ENCODE measurements at regions of chr18 and their contacts with region 1.

Region 1: GRCh38 chr18:36809590-36810381 is 19.0 kb downstream of the TPGS2 start:
- DNase-seq: peak in 2 of 5 donors; percentile 21 to 29
- ATAC-seq: peak in 3 of 4 donors; percentile 77 to 83 (median 80)
- H3K4me3 ChIP-seq: no peak overlapping the region
- H3K27ac ChIP-seq: no peak overlapping the region
- H3K4me1 ChIP-seq: peaks cover 0 to 22% (median 6%) of the 10 kb centered on the region in 12 donors
- H3K27me3 ChIP-seq: no peaks in the 10 kb centered on the region
- CTCF ChIP-seq: peak; percentile 70 to 88 (median 81)
- POLR2A ChIP-seq: no peak

Region 2: DNA sequence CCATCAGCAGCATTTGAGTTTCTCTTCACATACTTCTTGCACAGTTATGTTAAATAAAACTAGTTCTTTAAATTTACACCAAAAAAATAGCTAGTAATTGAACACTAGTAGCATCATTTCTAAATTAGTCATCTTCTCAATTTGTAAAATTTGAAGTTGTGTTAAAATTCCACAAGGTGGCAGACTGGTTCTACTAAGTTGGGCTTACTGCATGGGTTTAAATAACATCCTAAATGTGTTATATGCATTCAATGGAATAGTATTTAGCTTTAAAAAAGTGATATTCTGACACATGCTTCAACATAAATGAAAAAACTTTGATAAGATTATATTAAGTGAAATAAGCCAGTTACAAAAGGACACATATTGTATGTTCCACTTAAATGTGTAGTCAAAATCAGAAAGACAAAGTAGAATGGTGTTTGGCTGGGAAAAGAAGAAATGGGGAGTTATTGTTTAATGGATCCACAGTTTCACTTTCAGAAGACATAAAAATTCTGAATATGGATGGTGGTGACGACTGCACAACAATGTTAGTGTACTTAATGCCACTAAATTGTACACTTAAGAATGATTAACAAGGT is 713.8 kb before region 1 on chr18:
- intact Hi-C with region 1: loop called in 1 of 10 experiments (anchors 10 kb)
- DNase-seq: no peak
- ATAC-seq: peak in 1 of 4 donors; percentile 42
- H3K4me3 ChIP-seq: no peak overlapping the region
- H3K27ac ChIP-seq: no peak overlapping the region
- H3K4me1 ChIP-seq: no peaks in the 10 kb centered on the region
- H3K27me3 ChIP-seq: peaks cover 0 to 5% (median 0%) of the 10 kb centered on the region in 9 donors
- CTCF ChIP-seq: peak; percentile 34 to 77 (median 54)
- POLR2A ChIP-seq: no peak

Region 3: DNA sequence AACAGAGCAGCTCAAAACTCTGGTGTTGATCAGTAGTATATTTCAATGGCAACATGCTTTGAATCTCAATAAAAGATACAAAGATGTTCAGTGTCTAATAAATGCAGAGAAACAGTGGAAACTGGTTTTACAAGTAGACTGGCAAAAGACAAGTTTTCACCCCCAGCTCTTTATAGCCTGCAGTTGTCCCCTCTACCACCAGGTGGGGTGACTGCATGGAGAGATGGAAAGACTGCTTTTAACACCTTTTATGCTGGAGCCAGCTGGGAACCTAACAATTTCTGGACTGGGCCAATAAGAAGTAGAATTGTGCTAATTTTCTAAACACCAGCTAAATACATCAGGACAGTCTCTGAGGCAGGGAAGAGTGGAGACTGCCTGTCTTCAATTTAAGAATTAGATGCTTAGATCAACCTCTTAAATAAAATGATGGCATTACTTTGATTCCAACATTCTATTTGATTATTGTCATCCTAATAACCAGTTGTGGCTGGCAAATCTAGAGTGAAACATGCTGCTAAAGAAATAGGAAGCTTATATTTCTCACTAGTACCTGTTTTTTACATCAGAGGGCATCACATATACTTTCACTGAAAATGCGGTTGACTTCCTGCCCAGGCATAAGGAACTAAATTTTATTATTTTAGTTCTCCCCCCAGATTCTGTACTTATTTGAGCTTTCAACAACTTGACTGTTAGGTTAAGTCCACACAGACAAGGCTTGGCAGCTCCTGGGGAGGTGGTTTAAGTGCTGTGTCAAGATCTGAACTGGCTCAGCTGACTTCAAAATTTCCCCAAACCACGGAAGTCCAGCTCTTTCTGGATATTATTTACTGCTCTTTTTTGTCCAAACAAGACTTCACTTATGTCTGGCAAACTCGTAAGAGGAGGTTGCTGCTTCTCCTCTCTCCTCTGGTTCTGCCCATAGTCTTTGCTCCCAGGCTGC is 121.5 kb before region 1 on chr18:
- intact Hi-C with region 1: loop called in 7 of 10 experiments (anchors 1 to 10 kb)
- DNase-seq: peak in 3 of 5 donors; percentile 32 to 50 (median 35)
- ATAC-seq: peak in 3 of 4 donors; percentile 39 to 61 (median 54)
- H3K4me3 ChIP-seq: no peak overlapping the region
- H3K27ac ChIP-seq: no peak overlapping the region
- H3K4me1 ChIP-seq: peaks cover 0 to 9% (median 0%) of the 10 kb centered on the region in 12 donors
- H3K27me3 ChIP-seq: no peaks in the 10 kb centered on the region
- CTCF ChIP-seq: peak; percentile 68 to 86 (median 79)
- POLR2A ChIP-seq: no peak

Region 4: DNA sequence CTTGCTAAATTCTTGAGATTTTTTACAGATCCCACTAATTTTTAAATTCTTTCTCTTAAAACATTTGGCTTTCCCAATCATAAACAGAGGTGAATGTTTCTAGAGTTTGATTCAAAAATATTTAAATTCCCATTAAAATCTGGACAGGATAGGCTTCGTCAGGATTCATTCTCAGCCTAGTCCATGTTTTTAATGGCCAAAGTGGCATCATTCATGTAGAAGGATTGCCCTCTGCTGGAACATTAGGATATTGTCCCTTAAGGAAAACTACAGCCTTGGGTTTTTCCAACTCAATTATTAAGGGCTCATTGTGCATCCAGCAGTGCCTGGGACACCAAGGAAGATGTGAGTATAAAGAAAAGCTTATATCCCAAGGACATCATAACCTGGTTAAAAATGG is 52.7 kb before region 1 on chr18:
- intact Hi-C with region 1: loop called in 1 of 10 experiments (anchors 5 kb)
- DNase-seq: no peak
- ATAC-seq: peak in 2 of 4 donors; percentile 46 to 51
- H3K4me3 ChIP-seq: no peak overlapping the region
- H3K27ac ChIP-seq: no peak overlapping the region
- H3K4me1 ChIP-seq: peaks cover 0 to 23% (median 8%) of the 10 kb centered on the region in 12 donors
- H3K27me3 ChIP-seq: no peaks in the 10 kb centered on the region
- CTCF ChIP-seq: peak; percentile 40 to 70 (median 55)
- POLR2A ChIP-seq: no peak

Region 5: GRCh38 chr18:36769611-36770314 is 40.0 kb before region 1 on chr18:
- intact Hi-C with region 1: loop called in 2 of 10 experiments (anchors 2 to 5 kb)
- DNase-seq: peak in 1 of 5 donors; percentile 33
- ATAC-seq: peak in 3 of 4 donors; percentile 24 to 33 (median 32)
- H3K4me3 ChIP-seq: no peak overlapping the region
- H3K27ac ChIP-seq: peak overlapping the region in 1 of 12 donors; percentile 27
- H3K4me1 ChIP-seq: peaks cover 0 to 23% (median 1%) of the 10 kb centered on the region in 12 donors
- H3K27me3 ChIP-seq: no peaks in the 10 kb centered on the region
- CTCF ChIP-seq: peak; percentile 23 to 49 (median 34)
- POLR2A ChIP-seq: no peak

Measured in heart left ventricle (tissue), 16 donors.